OCI-LY7 (cell line): ENCODE measurements at regions of chr17 and their contacts with region 1.

Region 1: DNA sequence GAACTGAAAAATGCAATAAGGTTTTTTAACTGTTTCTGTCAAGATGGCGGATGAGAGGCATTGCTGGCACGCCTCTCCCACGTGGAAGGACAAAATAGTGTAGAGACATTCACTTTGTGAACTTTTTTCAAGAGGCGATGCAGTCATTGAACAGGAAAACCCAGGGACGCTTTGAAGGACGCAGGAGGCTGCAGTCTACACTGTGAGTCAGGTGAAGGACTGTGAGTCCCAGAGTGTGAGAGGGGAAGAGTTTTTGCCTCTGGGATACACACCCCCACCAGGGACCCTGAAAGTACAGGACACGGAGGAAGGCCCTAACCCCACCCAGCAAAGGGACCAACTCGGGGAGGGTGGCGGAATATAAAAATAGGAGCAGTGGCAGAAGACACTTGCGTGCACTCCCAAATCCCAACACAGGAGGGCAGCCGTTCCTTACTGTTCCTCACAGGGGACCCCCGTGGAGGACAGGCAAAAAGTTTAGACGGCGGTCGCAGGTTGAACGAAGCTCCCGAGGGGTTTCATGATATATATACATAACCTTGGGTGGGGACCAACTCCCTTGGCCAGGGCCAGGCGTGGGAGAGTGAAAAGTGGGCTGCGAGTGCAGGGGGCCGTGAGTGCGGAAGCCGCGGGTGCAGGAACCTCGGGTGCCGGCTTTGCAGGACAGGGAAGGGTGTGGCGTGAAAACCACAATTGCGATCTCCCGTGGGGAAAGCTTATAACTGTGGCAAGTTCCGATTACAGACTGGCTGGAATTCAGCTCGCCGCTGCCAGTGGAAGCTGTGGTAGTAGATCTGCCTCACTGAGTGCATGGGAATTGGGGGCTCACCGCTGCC is 82.0 kb upstream of the ALOX12 start:
- DNase-seq: peak; percentile 67
- H3K4me3 ChIP-seq: no peak overlapping the region
- H3K27ac ChIP-seq: no peak overlapping the region
- H3K4me1 ChIP-seq: no peaks in the 10 kb centered on the region
- CTCF ChIP-seq: peak; percentile 82

Region 2: DNA sequence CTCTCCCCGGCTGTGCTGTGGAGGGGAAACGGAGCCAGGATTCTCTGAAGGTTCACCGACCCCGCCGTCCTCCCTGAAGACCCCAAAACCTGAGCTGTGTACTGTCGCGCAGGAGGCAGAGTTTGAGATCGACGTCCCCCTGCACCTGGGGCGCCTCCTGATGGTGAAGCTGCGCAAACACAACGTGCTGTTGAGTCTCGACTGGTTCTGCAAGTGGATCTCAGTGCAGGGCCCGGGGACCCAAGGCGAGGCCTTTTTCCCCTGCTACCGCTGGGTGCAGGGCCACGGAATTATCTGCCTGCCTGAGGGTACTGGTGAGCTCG is 19.7 kb before region 1 on chr17:
- CTCF ChIA-PET with region 1: no interaction called
- POLR2A ChIA-PET with region 1: no interaction called
- intact Hi-C with region 1: no loop called
- DNase-seq: peak; percentile 4
- H3K4me3 ChIP-seq: no peak overlapping the region
- H3K27ac ChIP-seq: no peak overlapping the region
- H3K4me1 ChIP-seq: no peaks in the 10 kb centered on the region
- CTCF ChIP-seq: peak; percentile 71

Region 3: DNA sequence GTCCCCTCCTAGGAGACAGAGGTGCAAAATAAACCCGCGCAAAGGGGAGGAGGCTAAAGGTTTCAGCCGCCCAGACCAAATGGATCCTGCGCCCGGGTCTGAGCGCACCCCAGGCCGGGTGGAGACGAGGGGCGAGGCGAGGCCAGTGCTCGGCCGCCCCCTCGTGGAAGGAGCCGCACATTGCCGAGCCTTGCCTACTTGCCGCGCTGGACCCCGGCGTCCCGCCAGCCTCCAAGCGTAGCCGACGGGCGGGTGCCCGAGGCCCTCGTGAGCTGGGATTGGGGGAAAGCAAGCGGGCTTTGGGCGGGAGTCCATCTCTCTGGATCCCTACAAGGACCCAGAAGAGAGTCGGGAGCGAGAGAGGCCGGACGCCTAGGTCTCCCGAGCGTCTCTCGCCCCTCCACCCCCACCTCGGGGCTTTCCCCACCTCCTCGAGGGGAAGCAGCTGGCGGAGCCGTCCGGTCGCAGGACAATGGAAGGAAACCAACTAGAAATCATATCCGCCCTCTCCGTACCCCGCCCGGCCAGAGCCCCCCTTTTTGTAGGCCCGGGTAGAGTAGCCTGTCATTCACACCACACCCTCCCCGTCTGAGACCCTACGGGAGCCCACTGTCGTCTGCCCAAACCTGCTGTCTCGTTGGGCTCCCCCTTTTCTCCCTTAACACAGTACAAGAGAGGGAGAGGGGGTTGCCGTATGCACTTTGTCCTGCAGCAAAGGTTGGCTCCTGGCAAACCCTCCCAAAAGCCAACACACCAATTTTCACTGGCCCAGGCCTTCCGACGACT is 108.4 kb after region 1 on chr17:
- CTCF ChIA-PET with region 1: no interaction called
- POLR2A ChIA-PET with region 1: no interaction called
- intact Hi-C with region 1: loop called (anchors 5 kb)
- DNase-seq: peak; percentile 77
- H3K4me3 ChIP-seq: peak overlapping the region; percentile 8
- H3K27ac ChIP-seq: no peak overlapping the region
- H3K4me1 ChIP-seq: peaks cover 10% of the 10 kb centered on the region
- CTCF ChIP-seq: peak; percentile 86